Activated CD4-positive, alpha-beta T cell treated with anti-CD3 and anti-CD28 coated beads for 36 hours (primary cell): ENCODE measurements at regions of chr1 and their contacts with region 1.

Region 1: GRCh38 chr1:67430352-67431155 is at the start of gene SERBP1:
- DNase-seq: peak; percentile 97
- ATAC-seq: peak; percentile 91
- H3K4me3 Mint-ChIP-seq: peak within 1 kb of the TSS; percentile 97
- H3K27ac Mint-ChIP-seq: peak within 1 kb of the TSS; percentile 100
- H3K4me1 Mint-ChIP-seq: peaks cover 48% of the 10 kb centered on the region
- H3K27me3 Mint-ChIP-seq: no peaks in the 10 kb centered on the region
- total RNA-seq, gene SERBP1: 433 to 510 TPM

Region 2: DNA sequence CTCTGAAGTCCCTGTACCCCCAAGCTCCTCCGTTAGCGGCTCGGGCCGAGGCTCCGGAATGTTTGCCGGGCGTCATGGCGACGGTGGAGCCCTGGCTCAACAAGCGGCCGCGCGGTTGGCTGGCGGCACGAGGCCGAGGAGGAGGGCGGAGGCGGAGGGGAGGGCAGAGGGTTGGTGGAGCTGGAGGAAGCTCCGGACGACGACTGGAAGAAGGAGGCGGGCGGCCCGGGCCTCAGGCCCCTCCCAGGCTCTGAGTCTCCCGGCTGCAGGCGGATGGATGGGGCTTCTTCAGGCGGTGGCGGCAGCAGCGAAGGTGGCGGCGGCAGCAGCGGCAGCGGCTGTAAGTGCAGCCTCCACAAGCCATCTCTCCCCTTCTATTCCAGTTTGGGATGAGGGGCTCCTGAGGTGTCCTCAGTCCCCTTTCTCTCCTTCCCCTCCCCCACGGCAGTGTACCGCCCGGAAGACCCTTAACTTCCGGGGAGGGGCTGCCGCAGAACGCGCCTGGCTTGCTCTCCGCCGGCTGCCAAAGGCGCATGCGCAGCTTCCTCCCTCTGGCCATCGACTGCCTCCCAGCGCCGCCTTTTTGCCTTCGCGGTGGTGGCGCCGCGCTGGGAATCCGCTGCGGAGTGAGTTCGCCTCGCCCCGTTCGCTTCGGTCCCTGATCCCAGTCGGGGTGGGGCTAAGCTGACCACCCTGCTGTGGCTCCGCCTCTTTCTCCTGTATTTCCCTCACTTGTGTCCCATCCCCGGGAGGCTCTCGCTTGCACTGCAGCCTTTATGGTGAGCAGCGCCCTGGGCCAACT is 505.6 kb before region 1 on chr1 and contains the starts of genes DNAI4 and MIER1:
- CTCF ChIA-PET with region 1: no interaction called
- POLR2A ChIA-PET with region 1: interaction called, 3 read pairs
- intact Hi-C with region 1: loop called (anchors 1 to 5 kb)
- DNase-seq: peak; percentile 99
- ATAC-seq: peak; percentile 94
- H3K4me3 Mint-ChIP-seq: peak within 1 kb of the TSS; percentile 93
- H3K27ac Mint-ChIP-seq: peak within 1 kb of the TSS; percentile 92
- H3K4me1 Mint-ChIP-seq: peaks cover 52% of the 10 kb centered on the region
- H3K27me3 Mint-ChIP-seq: no peaks in the 10 kb centered on the region
- total RNA-seq, gene DNAI4: 0.87 to 3.6 TPM
- total RNA-seq, gene MIER1: 49.7 to 51.5 TPM

Region 3: GRCh38 chr1:66981679-66982078 is 448.9 kb before region 1 on chr1:
- CTCF ChIA-PET with region 1: no interaction called
- POLR2A ChIA-PET with region 1: no interaction called
- intact Hi-C with region 1: loop called in 1 of 2 experiments (anchors 5 kb)
- DNase-seq: peak; percentile 58
- ATAC-seq: peak; percentile 80
- H3K4me3 Mint-ChIP-seq: peak overlapping the region; percentile 14
- H3K27ac Mint-ChIP-seq: peak overlapping the region; percentile 61
- H3K4me1 Mint-ChIP-seq: peaks cover 42% of the 10 kb centered on the region
- H3K27me3 Mint-ChIP-seq: no peaks in the 10 kb centered on the region

Region 4: DNA sequence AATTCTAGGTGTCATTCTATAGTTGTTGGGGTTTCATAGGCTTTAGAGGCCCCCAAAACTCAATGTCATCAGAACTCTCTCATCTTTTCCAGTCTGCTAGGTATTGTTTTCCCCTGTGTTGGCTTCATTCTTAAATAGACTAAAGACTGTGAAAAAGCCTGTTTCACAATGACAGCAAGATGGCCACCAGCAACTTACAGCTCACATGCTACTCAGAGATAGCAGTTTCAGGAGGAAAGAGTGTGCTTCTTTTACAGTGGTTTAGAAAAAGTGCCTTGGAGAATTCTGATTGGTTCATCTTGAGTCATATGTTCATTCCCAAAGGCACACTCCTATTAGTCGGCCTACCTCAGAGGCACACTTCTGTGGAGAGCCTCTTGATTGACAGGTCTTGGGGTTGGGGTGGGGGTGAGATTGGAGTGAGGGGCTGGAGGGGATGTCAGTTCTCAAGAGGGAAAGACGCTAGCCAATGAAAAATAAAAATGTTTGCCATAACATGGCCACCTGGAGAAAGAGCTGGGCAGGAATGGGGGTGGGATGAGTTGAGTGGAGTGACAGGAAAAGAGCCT is 255.8 kb before region 1 on chr1:
- CTCF ChIA-PET with region 1: no interaction called
- POLR2A ChIA-PET with region 1: no interaction called
- intact Hi-C with region 1: loop called (anchors 1 to 5 kb)
- DNase-seq: peak; percentile 61
- ATAC-seq: peak; percentile 70
- H3K4me3 Mint-ChIP-seq: peak overlapping the region; percentile 25
- H3K27ac Mint-ChIP-seq: peak overlapping the region; percentile 94
- H3K4me1 Mint-ChIP-seq: peaks cover 68% of the 10 kb centered on the region
- H3K27me3 Mint-ChIP-seq: no peaks in the 10 kb centered on the region

Region 5: GRCh38 chr1:67339623-67340343 is 90.8 kb before region 1 on chr1:
- CTCF ChIA-PET with region 1: no interaction called
- POLR2A ChIA-PET with region 1: interaction called, 8 read pairs
- intact Hi-C with region 1: loop called (anchors 1 to 2 kb)
- DNase-seq: peak; percentile 67
- ATAC-seq: peak; percentile 67
- H3K4me3 Mint-ChIP-seq: peak overlapping the region; percentile 40
- H3K27ac Mint-ChIP-seq: peak overlapping the region; percentile 94
- H3K4me1 Mint-ChIP-seq: peaks cover 87% of the 10 kb centered on the region
- H3K27me3 Mint-ChIP-seq: no peaks in the 10 kb centered on the region

Region 6: GRCh38 chr1:67418839-67419586 is 11.5 kb before region 1 on chr1:
- CTCF ChIA-PET with region 1: interaction called, 12 read pairs
- POLR2A ChIA-PET with region 1: interaction called, 14 read pairs
- intact Hi-C with region 1: no loop called
- DNase-seq: no peak
- ATAC-seq: no peak
- H3K4me3 Mint-ChIP-seq: no peak overlapping the region
- H3K27ac Mint-ChIP-seq: peak overlapping the region; percentile 63
- H3K4me1 Mint-ChIP-seq: peaks cover 76% of the 10 kb centered on the region
- H3K27me3 Mint-ChIP-seq: no peaks in the 10 kb centered on the region

Region 7: DNA sequence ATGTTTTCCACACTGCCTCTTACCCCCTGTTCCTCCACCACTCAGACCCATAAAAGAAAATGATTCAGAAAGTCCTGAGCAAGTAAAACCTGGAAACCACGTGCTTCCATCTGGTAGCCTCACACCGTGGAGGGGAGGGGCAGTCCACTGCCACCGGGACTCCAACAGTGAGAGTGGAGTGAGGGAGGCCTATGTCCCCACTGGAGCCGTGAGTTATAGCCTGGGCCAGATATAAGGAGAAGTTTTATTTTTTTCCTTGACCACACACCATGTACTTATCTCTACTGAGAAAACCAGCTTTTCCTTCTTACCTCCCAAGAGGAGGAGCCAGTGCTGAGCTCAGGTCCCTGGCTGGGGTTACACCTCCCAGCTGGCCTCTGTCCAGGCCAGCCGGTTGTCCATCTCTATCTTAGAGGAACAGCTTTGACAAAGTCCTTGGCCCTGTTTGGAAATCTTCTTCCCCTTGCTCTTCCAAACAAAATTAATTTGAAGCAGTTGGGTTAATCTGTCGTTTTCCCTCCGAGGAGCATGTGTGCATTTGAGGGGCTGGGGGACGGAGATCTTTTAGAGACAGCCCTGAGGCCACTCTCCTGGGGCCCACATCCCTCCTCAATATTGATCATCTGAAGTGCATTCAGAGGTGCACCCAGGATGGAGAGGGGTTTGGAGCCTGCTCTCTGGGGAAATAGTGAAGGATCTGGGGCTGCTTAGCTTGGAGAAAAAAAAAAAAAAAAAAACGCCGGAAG is 48.8 kb after region 1 on chr1:
- CTCF ChIA-PET with region 1: no interaction called
- POLR2A ChIA-PET with region 1: no interaction called
- intact Hi-C with region 1: loop called in 1 of 2 experiments (anchors 2 kb)
- DNase-seq: peak; percentile 60
- ATAC-seq: peak; percentile 98
- H3K4me3 Mint-ChIP-seq: no peak overlapping the region
- H3K27ac Mint-ChIP-seq: peak overlapping the region; percentile 55
- H3K4me1 Mint-ChIP-seq: peaks cover 10% of the 10 kb centered on the region
- H3K27me3 Mint-ChIP-seq: peaks cover 6% of the 10 kb centered on the region